Calu3 (cell line): ENCODE measurements at regions of chr15 and their contacts with region 1.

Region 1: DNA sequence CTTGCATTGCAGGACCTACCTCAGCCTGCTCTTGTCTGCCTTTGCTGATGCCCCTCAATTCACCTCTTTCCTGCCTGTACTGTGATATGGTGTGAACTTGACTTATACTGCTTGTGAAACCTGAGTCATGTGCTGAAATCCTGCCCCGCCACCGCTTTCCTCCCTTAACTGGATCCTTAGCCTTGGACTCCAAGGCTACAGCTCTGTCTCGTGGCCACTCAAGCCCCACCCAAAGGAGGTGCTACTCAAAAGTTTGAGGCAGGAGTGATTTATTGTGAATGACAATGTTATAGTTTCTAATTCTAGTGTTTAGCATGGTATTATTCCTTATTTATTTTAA is 56.1 kb downstream of the MYZAP start:
- DNase-seq: peak; percentile 50
- H3K4me3 Mint-ChIP-seq: no peak overlapping the region
- H3K27ac Mint-ChIP-seq: no peak overlapping the region
- H3K4me1 Mint-ChIP-seq: peaks cover 16% of the 10 kb centered on the region
- H3K27me3 Mint-ChIP-seq: no peaks in the 10 kb centered on the region
- CTCF ChIP-seq: no peak

Region 2: GRCh38 chr15:57727031-57727430 is 79.3 kb after region 1 on chr15:
- CTCF ChIA-PET with region 1: no interaction called
- intact Hi-C with region 1: loop called (anchors 5 kb)
- DNase-seq: no peak
- H3K4me3 Mint-ChIP-seq: no peak overlapping the region
- H3K27ac Mint-ChIP-seq: no peak overlapping the region
- H3K4me1 Mint-ChIP-seq: no peaks in the 10 kb centered on the region
- H3K27me3 Mint-ChIP-seq: no peaks in the 10 kb centered on the region
- CTCF ChIP-seq: no peak